ENCODE measurements at regions of chrX and their contacts with region 1.

Region 1: GRCh38 chrX:47960406-47960805 is 43.4 kb downstream of the ZNF182 start:
- DNase-seq: no peak
- H3K4me3 Mint-ChIP-seq: no peak overlapping the region
- H3K27ac Mint-ChIP-seq: no peak overlapping the region
- H3K4me1 Mint-ChIP-seq: no peaks in the 10 kb centered on the region
- H3K27me3 Mint-ChIP-seq: no peaks in the 10 kb centered on the region
- CTCF ChIP-seq: no peak

Region 2: GRCh38 chrX:47836164-47837072 is 124.0 kb before region 1 on chrX and contains the start of gene ZNF81:
- CTCF ChIA-PET with region 1: interaction called, 10 read pairs
- intact Hi-C with region 1: no loop called
- DNase-seq: peak; percentile 93
- H3K4me3 Mint-ChIP-seq: peak within 1 kb of the TSS; percentile 96
- H3K27ac Mint-ChIP-seq: peak within 1 kb of the TSS; percentile 83
- H3K4me1 Mint-ChIP-seq: no peaks in the 10 kb centered on the region
- H3K27me3 Mint-ChIP-seq: no peaks in the 10 kb centered on the region
- CTCF ChIP-seq: no peak
- total RNA-seq, gene ZNF81: 10.5 and 10.7 TPM in 2 replicates

Region 3: DNA sequence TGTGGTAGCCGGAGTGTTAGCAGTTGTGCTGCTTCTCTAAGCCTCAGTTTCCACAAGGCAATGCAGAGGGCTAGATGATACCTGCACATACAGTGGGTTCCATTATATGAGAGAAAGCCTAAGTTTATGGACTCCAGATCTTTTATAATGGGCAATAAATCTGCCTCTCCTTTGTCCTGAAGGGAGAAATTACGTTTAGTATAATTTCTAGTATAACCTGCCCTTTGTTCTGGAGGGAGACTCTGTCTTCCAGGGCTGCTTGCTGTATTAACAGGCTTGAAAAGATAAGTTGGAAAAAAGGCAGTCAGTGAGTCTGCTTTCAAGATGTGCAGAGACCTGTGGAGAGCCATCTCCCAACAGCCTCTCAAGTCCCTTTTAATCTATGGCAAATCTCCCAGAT is 80.9 kb before region 1 on chrX:
- CTCF ChIA-PET with region 1: no interaction called
- intact Hi-C with region 1: no loop called
- DNase-seq: no peak
- H3K4me3 Mint-ChIP-seq: no peak overlapping the region
- H3K27ac Mint-ChIP-seq: no peak overlapping the region
- H3K4me1 Mint-ChIP-seq: no peaks in the 10 kb centered on the region
- H3K27me3 Mint-ChIP-seq: no peaks in the 10 kb centered on the region
- CTCF ChIP-seq: no peak